ENCODE measurements at regions of chr11 and their contacts with region 1.

Region 1: DNA sequence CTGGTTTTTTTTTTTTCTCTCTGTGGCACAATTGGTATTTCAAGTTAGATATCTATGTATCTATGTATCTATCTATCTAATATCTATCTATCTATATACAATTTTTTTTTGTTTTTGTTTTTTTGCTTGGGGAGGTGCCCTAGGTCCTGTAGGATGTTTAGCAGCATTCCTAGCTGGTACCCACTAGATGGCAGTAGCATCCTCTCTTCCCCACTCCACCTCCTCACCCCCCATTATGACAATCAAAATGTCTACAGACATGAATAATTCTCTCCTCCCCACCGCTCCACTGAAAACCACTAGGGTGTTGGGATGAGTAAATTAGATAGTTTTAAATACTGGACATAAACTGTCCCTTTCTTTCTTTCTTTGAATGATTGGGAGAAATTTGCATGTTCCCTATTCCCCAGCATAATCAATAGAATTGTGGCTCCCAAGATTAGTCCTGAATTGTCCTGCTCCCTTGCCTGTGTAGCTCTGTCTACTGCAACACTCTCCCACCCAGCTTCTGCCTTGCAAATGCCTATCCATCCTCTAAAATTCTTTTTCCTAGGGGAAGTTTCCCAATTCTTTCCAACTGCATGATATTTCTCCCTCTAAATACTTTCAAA is 1152.4 kb downstream of the LRRC4C start:
- DNase-seq: no peak
- H3K4me3 ChIP-seq: no peak overlapping the region
- H3K27me3 ChIP-seq: peaks cover 2% of the 10 kb centered on the region; the same call in 1 of the 2 replicates
- CTCF ChIP-seq: peak; percentile 81

Region 2: GRCh38 chr11:40281052-40281580 is 25.9 kb before region 1 on chr11:
- CTCF ChIA-PET with region 1: no interaction called
- POLR2A ChIA-PET with region 1: no interaction called
- DNase-seq: no peak
- H3K4me3 ChIP-seq: no peak overlapping the region
- H3K27me3 ChIP-seq: no peaks in the 10 kb centered on the region
- CTCF ChIP-seq: no peak

Region 3: DNA sequence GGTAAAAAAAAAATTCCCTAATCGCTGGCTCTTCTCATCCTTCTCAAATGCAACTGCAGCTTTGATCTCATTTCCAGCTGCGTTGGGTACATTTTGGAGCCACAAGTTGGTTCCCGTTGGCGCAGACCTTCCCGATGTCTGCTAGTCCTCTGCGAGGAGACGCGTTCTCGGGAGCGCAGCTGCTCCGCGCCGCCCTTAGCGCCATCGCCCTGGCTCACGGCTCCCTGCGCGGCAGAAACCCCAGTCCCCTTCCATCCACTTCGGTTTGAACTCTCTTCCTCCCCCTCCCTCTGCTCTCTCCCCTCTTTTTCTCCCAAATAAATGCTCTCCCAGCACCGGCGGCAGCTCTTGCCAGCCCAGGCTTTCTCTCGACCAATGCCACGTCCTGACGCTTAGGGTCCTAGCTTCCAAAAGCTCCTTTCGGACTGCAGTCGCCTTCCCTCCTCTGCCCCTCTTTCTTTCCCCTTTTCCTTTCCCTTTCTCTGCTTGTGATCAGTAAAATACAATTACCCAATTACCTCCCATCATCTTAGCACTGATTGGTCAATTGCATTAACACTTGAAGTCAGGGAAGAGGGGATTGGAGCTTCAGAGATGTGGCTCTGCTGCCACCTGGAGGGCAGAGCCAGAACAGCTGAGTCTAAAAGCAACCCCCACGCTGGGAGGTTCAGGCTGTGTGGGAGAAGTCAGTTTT is 13.2 kb before region 1 on chr11:
- CTCF ChIA-PET with region 1: interaction called, 47 read pairs
- POLR2A ChIA-PET with region 1: no interaction called
- DNase-seq: peak; percentile 41
- H3K4me3 ChIP-seq: peak overlapping the region; percentile 48
- H3K27me3 ChIP-seq: peaks cover 8% of the 10 kb centered on the region
- CTCF ChIP-seq: peak; percentile 97

Region 4: GRCh38 chr11:40722179-40722795 is 415.2 kb after region 1 on chr11:
- CTCF ChIA-PET with region 1: interaction called, 11 read pairs
- POLR2A ChIA-PET with region 1: no interaction called
- DNase-seq: no peak
- H3K4me3 ChIP-seq: no peak overlapping the region
- H3K27me3 ChIP-seq: no peaks in the 10 kb centered on the region
- CTCF ChIP-seq: peak; percentile 54